Left cardiac atrium (tissue), 4 donors: ENCODE measurements at regions of chr18 and their contacts with region 1.

Region 1: DNA sequence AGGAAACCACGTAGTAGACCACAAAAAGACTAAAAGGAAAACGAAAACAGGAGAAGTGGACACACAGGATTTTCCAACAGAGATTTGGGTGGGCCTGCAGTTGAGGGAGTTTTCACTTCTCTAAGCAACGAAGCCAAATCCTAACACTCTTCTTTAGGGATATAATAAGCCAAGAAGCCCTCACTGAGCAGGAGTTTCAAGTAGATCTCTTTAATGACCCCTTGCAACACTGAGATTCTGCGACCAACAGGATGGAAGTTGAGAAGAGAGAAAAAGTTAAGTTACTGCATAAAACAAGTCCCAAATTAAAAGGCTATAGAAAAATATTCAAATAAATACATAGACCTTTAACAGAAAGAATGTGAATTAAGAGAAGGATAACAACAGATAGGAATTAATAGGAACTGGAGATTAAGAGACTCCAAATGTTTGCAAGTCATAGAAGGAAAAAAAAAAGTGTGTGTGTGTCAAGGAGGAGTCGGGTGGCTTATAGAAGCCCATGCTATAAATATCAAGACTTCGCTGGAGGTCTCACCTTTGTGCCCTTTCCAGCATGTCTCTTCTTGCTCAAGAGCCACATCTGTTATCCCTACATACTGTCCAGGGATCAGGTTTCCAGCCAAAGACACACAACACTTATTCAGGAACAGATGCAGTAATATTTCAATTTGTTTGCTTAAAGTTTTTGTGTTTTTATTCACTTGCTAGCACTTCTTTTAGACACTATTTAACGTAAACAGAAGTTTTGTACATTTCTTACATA is 69.4 kb upstream of the ARHGAP28 start:
- DNase-seq: no peak
- ATAC-seq: no peak

Region 2: GRCh38 chr18:6525604-6526003 is 134.5 kb before region 1 on chr18:
- intact Hi-C with region 1: no loop called
- DNase-seq: no peak
- ATAC-seq: no peak

Region 3: DNA sequence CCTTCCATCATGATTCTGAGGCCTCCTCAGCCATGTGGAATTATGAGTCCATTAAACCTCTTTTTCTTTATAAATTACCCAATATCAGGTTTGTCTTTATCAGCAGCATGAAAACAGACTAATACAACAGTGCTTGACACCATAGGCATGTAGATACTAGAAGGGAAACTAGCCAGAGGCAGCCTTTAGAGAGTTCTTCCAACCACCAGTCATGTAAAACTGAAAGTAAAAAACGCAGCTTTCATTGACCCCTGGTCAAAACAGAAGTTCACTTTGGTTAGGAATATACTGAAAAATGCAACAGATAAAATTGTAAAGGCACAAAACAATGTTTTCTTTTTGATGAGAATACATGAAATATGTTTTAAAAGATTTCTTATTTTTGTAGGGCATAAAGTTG is 122.7 kb before region 1 on chr18:
- intact Hi-C with region 1: no loop called
- DNase-seq: no peak
- ATAC-seq: no peak

Region 4: GRCh38 chr18:6807515-6808257 is 147.5 kb after region 1 on chr18:
- intact Hi-C with region 1: no loop called
- DNase-seq: no peak
- ATAC-seq: no peak

Region 5: DNA sequence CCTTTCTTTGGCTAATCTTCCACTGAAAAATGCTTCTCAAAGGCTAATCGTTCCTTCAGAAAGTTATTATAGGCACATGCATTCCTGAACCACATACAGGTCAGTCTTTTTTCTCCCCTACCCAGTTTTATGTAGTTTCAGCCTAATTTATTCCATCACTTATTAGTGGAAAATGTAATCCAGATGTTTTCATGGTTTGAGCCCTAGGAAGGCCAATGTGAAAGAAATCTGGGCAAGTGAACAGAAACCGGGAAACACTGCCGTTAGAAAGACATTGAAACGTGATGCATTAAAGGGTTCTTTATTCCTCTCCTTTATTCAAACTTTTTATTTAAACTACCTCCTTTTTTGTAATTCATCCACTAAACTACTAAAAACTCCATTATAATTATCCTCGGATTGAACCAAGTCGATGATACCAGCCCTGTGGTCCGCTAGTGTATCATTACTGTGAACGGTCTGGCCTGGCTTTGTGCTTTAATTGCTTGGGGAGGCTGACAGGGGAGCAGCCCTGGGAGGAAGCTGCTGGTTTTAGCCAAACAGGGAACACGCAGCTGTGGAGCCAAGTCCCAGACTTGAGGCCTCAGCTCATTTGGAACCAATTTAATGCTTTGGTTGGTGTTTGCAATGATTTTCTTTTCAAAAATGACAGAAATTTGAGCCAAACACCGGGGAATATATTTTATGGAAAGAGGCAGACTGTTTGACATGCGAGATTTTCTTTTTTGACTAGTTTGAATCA is 218.6 kb after region 1 on chr18:
- intact Hi-C with region 1: loop called in 1 of 2 experiments (anchors 10 kb)
- DNase-seq: no peak
- ATAC-seq: peak; percentile 50 to 59